HEK293 (cell line): ENCODE measurements at regions of chr19 and their contacts with region 1.

Region 1: DNA sequence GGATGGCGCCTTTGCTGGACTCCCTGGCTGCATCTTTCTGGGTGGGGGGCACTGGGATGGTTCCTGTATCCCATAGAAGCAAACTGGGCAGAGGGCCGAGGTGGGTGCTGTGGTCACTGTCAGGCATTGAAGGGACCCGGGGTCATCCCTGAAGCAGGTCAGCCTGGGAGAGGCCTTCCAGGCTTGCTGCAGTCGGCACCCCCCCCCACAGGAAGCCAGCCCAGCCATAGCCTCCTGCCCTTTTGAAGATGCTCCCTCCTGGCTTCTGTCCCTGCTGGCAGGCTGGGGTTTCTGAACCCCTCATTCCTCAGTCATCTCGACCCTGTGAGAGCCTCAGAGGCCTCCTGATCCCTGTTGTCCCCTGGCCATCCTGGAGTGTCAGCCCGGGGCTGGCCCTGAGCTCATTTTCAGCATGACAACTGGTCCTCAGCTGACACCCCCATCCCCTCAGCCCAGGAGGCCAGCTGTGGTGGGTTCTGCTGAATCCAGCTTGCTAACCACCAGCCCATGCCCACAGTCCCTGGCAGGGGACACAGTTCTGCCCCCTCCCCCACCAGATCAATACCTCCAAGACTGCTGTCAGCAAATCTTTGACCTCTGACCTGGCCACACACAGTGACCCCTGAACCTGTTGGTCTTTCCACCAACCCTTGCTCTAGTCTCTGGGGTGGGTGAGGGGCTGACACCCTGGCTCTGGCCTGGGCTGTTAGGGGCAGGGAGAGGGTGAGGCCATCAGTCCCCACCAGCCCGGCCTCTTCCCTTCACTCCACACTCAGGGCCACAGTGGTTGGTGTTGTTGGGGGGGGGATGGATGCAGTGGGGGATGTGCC is 21.5 kb upstream of the SLC7A10 start:
- H3K4me3 ChIP-seq: no peak overlapping the region
- H3K27ac ChIP-seq: no peak overlapping the region
- H3K4me1 ChIP-seq: no peaks in the 10 kb centered on the region
- CTCF ChIP-seq: no peak

Region 2: DNA sequence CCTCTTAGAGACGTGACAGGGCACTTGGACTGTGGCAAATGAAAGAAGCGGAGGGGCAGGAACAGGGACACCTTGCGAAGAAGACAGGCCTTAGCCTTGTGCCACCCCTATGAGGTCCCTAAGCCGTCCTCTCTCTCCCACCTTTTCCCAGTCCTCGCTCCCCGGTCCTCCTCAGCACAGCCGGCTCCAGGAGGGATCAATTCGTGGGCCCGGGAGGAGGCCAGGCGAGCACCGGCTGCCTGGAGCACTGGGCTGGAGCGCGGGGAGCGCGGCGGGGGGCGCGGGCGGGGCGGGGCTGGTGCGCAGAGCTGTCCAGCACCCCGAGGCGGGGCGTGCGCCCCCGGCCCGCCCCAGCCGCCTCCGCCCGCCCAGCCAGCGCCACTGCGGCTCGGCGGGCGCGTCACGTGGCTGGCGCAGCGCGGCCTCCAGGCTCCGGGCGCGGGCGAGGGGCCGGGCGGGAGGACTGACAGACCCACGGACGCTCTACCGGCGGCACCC is 53.3 kb before region 1 on chr19 and contains the start of gene LRP3:
- CTCF ChIA-PET with region 1: no interaction called
- POLR2A ChIA-PET with region 1: no interaction called
- H3K4me3 ChIP-seq: peak within 1 kb of the TSS; percentile 47
- H3K27ac ChIP-seq: peak within 1 kb of the TSS; percentile 95
- H3K4me1 ChIP-seq: peaks cover 15% of the 10 kb centered on the region
- CTCF ChIP-seq: no peak

Region 3: DNA sequence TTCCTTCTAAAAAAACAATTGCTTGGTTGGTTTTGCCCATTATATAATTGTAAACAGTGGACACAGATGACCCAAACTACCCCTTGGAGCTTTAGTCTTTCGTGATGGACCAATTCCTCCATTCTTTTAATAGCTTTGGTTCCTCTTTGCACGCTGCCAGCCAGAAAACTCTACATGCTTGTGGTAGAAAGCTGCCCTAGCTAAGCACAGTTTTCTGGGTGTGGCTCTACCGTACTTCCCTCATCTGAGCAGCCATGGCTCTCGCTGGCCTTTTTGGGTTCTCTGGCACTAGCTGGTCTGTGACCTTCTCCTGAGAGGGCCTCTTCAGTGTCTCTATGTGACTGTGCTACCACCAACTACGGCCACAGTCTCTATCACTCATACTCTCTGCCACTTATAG is 85.1 kb after region 1 on chr19:
- CTCF ChIA-PET with region 1: no interaction called
- POLR2A ChIA-PET with region 1: no interaction called
- H3K4me3 ChIP-seq: no peak overlapping the region
- H3K27ac ChIP-seq: peak overlapping the region; percentile 16; the same call in 1 of the 2 replicates
- H3K4me1 ChIP-seq: no peaks in the 10 kb centered on the region
- CTCF ChIP-seq: no peak

Region 4: DNA sequence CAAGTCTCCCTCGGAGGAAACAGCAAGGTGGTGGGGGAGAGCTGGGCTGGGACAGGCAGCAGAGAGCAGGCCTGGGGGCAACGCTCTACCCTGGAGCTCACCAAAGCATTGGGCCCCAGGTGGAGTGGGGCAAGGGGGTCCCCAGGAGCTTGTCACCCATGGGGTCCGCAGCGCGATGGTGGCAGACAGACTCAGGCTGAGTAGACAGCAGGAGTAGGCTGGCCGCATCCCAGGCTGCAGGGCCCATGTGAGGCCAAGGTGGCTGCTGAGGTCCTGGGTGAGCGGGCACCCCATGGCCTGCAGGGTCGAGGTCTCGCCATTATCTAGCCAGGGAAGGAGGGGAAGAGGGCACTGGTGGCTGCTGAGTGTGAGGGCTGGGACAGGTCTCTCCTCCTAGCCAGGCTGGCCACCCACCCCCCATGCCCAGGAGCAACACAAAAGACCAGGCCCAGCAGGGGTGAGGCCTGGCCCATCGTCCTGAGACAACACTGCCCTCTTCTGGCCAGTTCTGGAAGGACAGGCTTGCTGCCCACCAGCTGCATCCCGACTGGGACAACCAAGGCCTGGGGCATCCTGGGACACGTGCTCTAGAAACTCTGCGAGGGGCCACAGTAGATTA is 159.5 kb after region 1 on chr19:
- CTCF ChIA-PET with region 1: interaction called, 292 read pairs
- POLR2A ChIA-PET with region 1: no interaction called
- H3K4me3 ChIP-seq: no peak overlapping the region
- H3K27ac ChIP-seq: no peak overlapping the region
- H3K4me1 ChIP-seq: no peaks in the 10 kb centered on the region
- CTCF ChIP-seq: peak; percentile 99